ENCODE measurements at regions of chr13 and their contacts with region 1.

Region 1: GRCh38 chr13:66618702-66619101 is 611.4 kb downstream of the PCDH9 start:
- DNase-seq: no peak
- H3K4me3 Mint-ChIP-seq: no peak overlapping the region
- H3K27ac Mint-ChIP-seq: no peak overlapping the region
- H3K4me1 Mint-ChIP-seq: no peaks in the 10 kb centered on the region
- H3K27me3 Mint-ChIP-seq: no peaks in the 10 kb centered on the region

Region 2: GRCh38 chr13:67238277-67238859 is 619.7 kb after region 1 on chr13:
- intact Hi-C with region 1: loop called (anchors 2 kb)
- DNase-seq: no peak
- H3K4me3 Mint-ChIP-seq: no peak overlapping the region
- H3K27ac Mint-ChIP-seq: no peak overlapping the region
- H3K4me1 Mint-ChIP-seq: no peaks in the 10 kb centered on the region
- H3K27me3 Mint-ChIP-seq: peaks cover 3% of the 10 kb centered on the region

Measured in activated T-helper 1 cell treated with anti-CD3 and anti-CD28 coated beads, Interleukin-12 subunit alpha, Interleukin-12 subunit beta, Interleukin-2, Interleukin-4 antibody, amounts not matched to agents 30 ng/mL and 10 ng/mL and 1 ng/mL, durations not matched to agents 14 hours and 24 hours and 36 hours (primary cell).